ENCODE measurements at regions of chr17 and their contacts with region 1.

Region 1: GRCh38 chr17:57849874-57850754 is at the start of gene MRPS23:
- DNase-seq: peak; percentile 83
- ATAC-seq: peak; percentile 96
- H3K4me3 ChIP-seq: peak within 1 kb of the TSS; percentile 99
- H3K27ac ChIP-seq: peak within 1 kb of the TSS; percentile 99
- H3K4me1 ChIP-seq: peaks cover 25% of the 10 kb centered on the region
- H3K27me3 ChIP-seq: no peaks in the 10 kb centered on the region
- CTCF ChIP-seq: no peak
- total RNA-seq, gene MRPS23: 85.4 TPM

Region 2: DNA sequence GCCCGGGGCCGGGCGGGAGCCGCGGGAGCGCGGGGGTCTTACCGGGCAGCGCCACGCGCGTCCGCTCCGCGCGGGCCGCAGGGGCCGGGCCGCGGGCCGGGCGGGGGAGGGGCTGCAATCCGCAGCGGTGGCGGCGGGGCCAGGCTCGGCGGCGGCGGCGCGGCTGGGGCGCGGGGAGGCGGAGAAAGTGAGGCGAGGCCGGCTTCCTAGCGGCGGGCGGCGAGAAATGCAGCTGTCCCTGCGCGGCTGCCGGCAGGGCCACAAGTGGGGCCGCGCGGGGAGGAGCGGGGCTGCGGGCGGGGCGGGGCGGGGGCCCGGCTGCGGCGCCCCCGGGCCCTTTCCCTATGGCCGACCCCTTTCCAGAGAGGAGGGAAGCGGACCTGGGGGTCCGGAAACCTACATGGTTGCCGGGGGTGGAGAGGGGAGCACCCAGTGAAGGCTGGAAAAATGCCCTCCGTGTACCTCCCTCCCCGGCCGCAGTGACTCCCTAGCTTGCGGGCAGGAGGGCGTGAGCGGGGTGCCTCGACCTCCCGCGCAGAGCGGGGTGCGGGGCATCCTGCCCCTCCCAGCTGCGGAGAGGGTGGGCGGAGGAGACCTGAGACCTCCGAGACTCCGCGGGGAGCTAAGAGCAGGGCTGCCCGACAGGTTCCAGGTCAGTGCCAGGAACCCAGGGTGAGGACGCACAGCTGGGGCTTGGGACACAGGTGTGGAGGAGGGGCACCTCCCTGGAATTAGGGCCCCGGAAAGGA is 105.2 kb after region 1 on chr17 and contains the start of gene CUEDC1:
- CTCF ChIA-PET with region 1: no interaction called
- POLR2A ChIA-PET with region 1: interaction called, 12 read pairs
- in situ Hi-C with region 1: no loop called
- intact Hi-C with region 1: no loop called
- DNase-seq: no peak
- ATAC-seq: peak; percentile 82
- H3K4me3 ChIP-seq: peak within 1 kb of the TSS; percentile 73 to 81
- H3K27ac ChIP-seq: peak within 1 kb of the TSS; percentile 98
- H3K4me1 ChIP-seq: peaks cover 66% of the 10 kb centered on the region
- H3K27me3 ChIP-seq: no peaks in the 10 kb centered on the region
- CTCF ChIP-seq: no peak; the same call in 1 of the 2 replicates
- total RNA-seq, gene CUEDC1: 103 TPM

Region 3: DNA sequence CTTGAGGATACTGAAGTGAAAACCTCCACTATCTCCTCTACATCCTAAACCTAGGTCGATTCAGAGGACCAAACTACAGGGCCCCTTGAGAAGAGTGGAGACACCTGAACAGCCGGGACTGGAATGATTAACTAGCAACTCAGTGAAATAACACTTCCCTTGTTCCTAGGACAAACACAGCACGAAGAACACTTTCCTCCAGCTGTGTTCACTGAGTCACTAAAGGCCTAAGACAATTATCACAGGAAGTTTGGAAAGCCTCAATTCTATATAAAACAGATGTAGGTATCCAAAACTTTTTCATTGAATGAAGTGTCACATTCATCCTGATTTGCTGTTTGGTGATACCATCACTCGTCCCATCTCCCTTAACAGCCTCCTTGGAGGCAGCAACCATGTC is 120.6 kb after region 1 on chr17:
- CTCF ChIA-PET with region 1: interaction called, 10 read pairs
- POLR2A ChIA-PET with region 1: no interaction called
- in situ Hi-C with region 1: no loop called
- intact Hi-C with region 1: no loop called
- DNase-seq: no peak
- ATAC-seq: no peak
- H3K4me3 ChIP-seq: no peak overlapping the region
- H3K27ac ChIP-seq: no peak overlapping the region; the same call in 1 of the 2 replicates
- H3K4me1 ChIP-seq: no peaks in the 10 kb centered on the region
- H3K27me3 ChIP-seq: no peaks in the 10 kb centered on the region
- CTCF ChIP-seq: no peak

Region 4: DNA sequence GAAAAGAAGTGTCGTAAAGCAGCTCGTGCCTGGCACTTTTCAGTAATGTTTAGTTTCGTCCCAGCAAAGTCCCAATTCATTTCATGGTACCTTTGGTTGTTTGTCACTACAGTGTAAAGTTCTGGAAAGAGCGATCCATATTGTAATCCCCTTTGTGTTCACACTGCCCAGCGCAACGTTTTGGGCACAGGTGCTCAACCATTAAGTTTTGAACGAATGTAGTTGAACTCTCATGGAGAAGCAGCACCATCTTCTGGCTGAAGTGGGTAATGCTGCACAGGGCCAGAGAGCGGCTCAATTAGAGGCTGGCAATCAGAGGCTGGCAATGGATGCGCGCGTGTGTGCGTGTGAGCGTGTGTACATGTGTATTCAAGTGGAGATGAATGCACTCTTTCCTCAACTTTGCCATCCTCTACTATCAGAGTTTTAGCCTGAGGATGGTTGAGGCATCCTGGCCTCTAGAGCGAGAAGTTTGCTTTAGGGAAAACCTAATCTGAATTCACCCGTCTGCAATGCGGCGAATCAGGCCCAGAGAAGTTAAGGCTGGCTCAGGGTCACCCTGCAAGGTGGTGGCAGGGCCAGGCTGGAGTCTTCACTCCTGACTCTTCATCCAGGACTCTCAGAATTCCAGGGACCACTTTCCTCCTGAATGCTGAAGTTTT is 263.0 kb after region 1 on chr17:
- CTCF ChIA-PET with region 1: interaction called, 15 read pairs
- POLR2A ChIA-PET with region 1: no interaction called
- in situ Hi-C with region 1: no loop called
- intact Hi-C with region 1: no loop called
- DNase-seq: peak; percentile 70
- ATAC-seq: peak; percentile 88
- H3K4me3 ChIP-seq: no peak overlapping the region
- H3K27ac ChIP-seq: no peak overlapping the region
- H3K4me1 ChIP-seq: no peaks in the 10 kb centered on the region
- H3K27me3 ChIP-seq: no peaks in the 10 kb centered on the region
- CTCF ChIP-seq: peak; percentile 97

Measured in Panc1 (cell line).